ENCODE measurements at regions of chr19 and their contacts with region 1.

Region 1: GRCh38 chr19:3108775-3109174 is 14.6 kb downstream of the GNA11 start:
- DNase-seq: no peak
- H3K4me3 ChIP-seq: no peak overlapping the region
- H3K27me3 ChIP-seq: no peaks in the 10 kb centered on the region
- CTCF ChIP-seq: peak; percentile 93

Region 2: DNA sequence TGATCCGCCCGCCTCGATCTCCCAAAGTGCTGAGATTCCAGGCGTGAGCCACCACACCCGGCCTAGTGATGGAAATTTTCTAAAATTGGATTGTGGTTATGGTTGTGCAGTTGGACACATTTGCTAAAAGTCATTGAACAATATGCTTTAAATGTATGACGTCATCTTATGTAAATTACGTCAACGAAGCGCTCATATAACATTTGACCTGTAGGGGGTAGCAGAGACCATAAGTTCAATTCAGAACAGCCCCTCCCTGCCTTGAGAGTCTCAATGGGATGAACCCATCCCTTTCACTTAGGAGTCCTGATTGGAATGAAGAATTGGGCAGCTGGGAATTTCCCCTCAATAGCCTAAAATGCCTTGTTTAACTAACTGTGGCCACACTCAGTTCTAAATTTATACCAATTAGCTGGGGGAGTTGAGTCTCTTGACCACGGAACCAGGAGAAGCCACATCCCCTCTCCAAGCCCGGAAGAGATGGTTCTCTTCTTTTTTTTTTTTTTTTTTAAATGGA is 146.7 kb before region 1 on chr19:
- CTCF ChIA-PET with region 1: interaction called, 11 read pairs
- POLR2A ChIA-PET with region 1: no interaction called
- DNase-seq: peak; percentile 37
- H3K4me3 ChIP-seq: no peak overlapping the region
- H3K27me3 ChIP-seq: no peaks in the 10 kb centered on the region
- CTCF ChIP-seq: peak; percentile 60

Region 3: GRCh38 chr19:3094601-3095437 is 14.0 kb before region 1 on chr19:
- CTCF ChIA-PET with region 1: interaction called, 55 read pairs
- POLR2A ChIA-PET with region 1: no interaction called
- DNase-seq: no peak
- H3K4me3 ChIP-seq: peak overlapping the region; percentile 80
- H3K27me3 ChIP-seq: no peaks in the 10 kb centered on the region
- CTCF ChIP-seq: no peak

Measured in BJ (cell line).